ENCODE measurements at regions of chr16 and their contacts with region 1.

Region 1: DNA sequence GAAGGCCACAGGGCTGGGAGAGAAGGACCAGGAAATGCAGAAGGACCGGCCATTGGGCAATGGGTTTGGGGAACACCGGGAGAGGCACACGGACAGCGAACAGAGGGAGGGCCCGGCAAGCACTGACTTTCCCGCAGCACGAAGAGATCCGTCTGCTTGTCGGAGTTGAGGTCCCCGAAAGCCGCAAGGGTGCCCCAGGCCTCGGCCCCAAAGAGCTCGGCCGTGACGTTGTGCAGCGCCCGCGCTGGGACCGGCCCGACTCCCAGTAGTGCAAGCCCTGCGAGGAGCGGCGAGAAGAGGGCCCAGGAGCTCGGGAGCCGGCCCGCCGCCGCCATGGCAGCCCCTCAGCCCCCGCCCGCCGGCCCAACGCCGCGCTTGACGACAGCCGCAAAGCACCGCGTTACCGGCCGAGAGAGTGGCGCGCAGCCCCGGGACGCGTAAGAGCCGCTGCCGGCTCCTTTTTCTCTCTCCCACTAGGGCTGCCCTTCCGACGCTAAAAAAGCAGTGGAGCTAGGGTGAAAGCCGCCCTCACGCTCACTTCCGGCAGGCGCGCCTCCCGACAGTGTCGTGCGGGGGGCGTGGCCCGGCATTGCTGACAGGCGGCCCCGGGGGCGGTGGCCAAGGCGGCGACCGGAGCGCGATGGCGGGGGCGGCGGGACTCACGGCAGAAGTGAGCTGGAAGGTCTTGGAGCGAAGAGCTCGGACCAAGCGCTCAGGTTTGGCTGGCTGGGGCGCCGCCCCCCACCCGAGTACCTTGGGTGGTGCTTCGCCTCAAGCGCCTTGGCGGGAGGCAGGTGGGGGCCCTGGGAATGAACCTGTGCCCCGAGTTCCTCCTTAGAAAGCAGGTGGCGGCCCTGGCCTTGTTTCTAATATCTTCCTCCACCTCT is at the starts of genes ITFG1 and PHKB:
- DNase-seq: peak; percentile 74 to 96 (median 92)

Region 2: DNA sequence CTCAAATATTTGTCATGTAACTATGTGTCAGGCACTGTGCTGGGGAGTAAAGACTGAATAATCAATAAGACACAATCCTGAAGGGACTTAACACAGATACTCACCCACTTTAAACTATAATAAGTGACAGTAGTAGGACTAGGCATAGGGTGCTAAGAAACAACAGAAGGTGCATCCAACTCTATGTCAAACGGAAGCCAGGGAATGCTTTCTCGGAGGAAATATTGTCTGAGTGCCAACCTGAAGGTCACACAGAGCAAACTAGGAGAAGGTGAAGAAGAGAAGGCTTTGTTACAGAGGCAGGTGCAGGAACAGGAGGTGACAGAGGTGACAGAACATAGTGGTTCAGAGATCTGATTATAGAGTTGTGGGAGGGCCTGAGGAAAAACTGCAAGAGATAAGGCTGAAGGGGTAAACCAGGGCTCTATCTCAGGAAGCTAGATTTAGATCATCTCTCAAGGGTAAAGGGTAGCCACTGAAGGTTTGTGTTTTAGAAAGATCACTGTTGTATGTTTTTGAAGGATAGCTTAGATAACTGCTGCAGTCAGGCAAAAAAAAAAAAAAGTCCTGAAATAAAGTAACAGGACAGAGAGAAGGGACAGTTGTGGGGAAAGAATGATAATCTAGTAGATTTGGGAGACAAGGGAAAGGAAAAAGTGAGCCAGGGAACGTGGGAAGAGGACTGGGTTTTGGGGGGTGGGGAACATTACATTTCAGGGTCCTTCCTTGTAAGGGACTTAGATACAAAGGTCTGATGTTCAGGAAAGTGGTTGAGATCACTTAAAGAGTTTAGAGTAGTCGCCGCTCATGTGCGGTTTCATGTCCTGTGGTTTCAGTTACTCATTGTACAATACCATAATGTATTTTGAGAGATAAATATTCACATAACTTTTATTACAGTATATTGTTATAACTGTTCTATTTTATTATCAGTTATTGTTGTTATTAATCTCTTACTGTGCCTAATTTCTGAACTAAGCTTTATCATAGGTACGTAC is 231.6 kb before region 1 on chr16:
- intact Hi-C with region 1: no loop called
- DNase-seq: no peak

Region 3: GRCh38 chr16:47311738-47312505 is 149.0 kb before region 1 on chr16:
- intact Hi-C with region 1: loop called (anchors 10 kb)
- DNase-seq: peak in 37 of 42 donors; percentile 14 to 79 (median 57)

Region 4: DNA sequence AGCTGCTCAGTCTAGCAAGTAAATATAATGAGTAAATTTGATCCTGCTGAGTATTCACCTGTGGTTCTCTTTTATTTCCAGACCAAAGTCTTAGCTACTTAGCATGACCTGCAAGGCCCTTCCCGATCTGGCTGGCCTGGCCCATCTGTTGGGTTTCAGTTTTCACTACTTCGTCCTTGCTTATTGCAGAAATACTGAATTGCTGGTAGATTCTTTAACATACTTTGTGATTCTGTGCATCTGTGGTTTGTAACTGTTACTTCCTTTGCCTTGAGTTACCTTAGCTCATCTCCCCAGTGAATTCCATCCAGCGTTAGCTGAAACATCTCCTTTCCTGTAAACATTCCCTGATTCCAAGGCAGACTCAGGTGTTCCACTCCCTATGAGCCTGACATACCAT is 131.3 kb after region 1 on chr16:
- intact Hi-C with region 1: no loop called
- DNase-seq: no peak

Measured in head of caudate nucleus (tissue), 42 donors.